ENCODE measurements at regions of chr5 and their contacts with region 1.

Region 1: GRCh38 chr5:142611154-142611553 is 74.7 kb downstream of the FGF1 start:
- DNase-seq: peak; percentile 30
- H3K4me3 ChIP-seq: no peak overlapping the region
- H3K27ac ChIP-seq: no peak overlapping the region
- H3K27me3 ChIP-seq: no peaks in the 10 kb centered on the region
- CTCF ChIP-seq: peak; percentile 92

Region 2: DNA sequence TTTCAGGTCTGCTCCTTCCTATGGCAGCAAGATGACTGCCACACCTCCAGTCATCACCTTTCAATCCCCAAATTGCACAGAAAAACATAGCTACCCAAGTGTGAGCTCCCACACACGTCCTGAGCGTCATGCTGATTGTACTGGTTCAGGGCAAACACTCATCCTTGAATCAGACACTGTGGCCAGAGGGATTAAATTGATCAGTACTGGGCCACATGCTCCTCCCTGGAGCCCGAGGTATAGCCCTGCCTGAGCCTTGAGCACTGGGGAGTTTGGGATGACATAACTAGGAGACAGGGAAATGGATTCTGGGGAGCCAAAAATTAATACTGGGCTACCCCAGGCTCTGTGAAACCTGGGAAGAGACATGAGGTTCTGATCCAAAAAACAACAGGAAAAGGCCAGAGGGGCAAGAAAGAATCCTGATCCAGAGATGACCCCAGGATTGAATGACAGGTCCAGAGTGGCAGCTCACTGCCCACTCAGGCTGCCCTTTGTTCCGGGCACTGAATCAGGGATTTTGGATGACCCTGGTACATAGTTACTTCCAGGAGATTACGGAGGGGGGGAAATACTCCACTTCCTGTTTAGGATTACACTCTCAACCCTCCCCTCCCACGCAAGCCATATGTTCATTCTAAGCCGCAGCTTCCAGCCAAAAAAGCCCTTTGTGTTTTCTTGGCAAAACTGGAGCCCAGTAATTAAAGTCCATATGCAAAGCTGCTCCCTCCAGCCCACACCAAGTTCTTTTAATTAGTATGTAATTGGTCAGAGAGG is 144.8 kb before region 1 on chr5:
- CTCF ChIA-PET with region 1: no interaction called
- POLR2A ChIA-PET with region 1: no interaction called
- DNase-seq: no peak
- H3K4me3 ChIP-seq: no peak overlapping the region
- H3K27ac ChIP-seq: peak overlapping the region; percentile 75
- H3K27me3 ChIP-seq: no peaks in the 10 kb centered on the region
- CTCF ChIP-seq: no peak

Region 3: GRCh38 chr5:142568283-142568995 is 42.7 kb before region 1 on chr5:
- CTCF ChIA-PET with region 1: no interaction called
- POLR2A ChIA-PET with region 1: no interaction called
- DNase-seq: peak; percentile 21
- H3K4me3 ChIP-seq: no peak overlapping the region
- H3K27ac ChIP-seq: peak overlapping the region; percentile 68
- H3K27me3 ChIP-seq: no peaks in the 10 kb centered on the region
- CTCF ChIP-seq: no peak

Region 4: DNA sequence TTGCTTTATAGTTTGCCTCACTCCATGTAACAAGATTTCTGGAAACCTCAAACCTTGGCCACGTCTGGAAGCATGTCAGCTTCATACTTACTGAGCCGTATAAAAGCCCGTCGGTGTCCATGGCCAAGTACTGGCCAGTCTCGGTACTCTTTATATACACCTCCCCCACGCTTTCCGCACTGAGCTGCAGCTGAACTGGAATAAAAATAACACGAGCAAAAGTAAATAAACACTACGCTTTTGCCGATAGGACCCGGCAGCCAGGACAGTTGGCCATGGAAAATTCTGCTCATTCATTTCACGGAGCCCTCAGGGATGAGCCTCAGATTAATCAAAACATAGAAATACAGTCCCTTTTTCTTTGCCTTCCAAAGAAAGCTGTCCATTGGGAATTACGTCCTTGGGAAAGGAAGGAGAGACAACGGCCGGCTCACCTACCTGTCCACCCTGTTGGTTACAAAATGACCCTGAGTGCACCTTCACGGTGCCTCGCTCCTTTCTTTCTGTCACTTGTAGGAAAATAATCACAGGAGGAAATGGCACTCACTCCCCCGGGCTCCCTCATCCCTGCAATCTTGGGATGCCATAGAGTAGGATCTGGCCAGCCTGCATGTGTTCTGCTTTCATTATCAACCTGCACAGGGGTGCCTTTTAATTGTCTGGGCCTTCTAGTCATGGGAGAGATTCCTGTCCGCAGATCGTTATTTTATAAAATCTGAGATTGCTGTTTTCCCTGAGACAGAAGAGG is 10.4 kb before region 1 on chr5:
- CTCF ChIA-PET with region 1: interaction called, 13 read pairs
- POLR2A ChIA-PET with region 1: no interaction called
- DNase-seq: peak; percentile 69
- H3K4me3 ChIP-seq: peak overlapping the region; percentile 41
- H3K27ac ChIP-seq: peak overlapping the region; percentile 72
- H3K27me3 ChIP-seq: no peaks in the 10 kb centered on the region
- CTCF ChIP-seq: no peak

Region 5: GRCh38 chr5:142636076-142636475 is 24.9 kb after region 1 on chr5:
- CTCF ChIA-PET with region 1: interaction called, 10 read pairs
- POLR2A ChIA-PET with region 1: no interaction called
- DNase-seq: no peak
- H3K4me3 ChIP-seq: no peak overlapping the region
- H3K27ac ChIP-seq: no peak overlapping the region
- H3K27me3 ChIP-seq: no peaks in the 10 kb centered on the region
- CTCF ChIP-seq: no peak